ENCODE measurements at regions of chr4 and their contacts with region 1.

Region 1: GRCh38 chr4:151753041-151753440 is 7.8 kb downstream of the GATB start:
- DNase-seq: no peak
- ATAC-seq: no peak
- H3K4me3 ChIP-seq: no peak overlapping the region
- H3K27ac ChIP-seq: no peak overlapping the region
- H3K4me1 ChIP-seq: no peaks in the 10 kb centered on the region
- H3K27me3 ChIP-seq: no peaks in the 10 kb centered on the region

Region 2: GRCh38 chr4:151099229-151099975 is 653.6 kb before region 1 on chr4 and contains the start of gene RPS3A:
- intact Hi-C with region 1: loop called in 1 of 2 experiments (anchors 10 kb)
- DNase-seq: peak; percentile 97 to 98
- ATAC-seq: peak; percentile 99
- H3K4me3 ChIP-seq: peak within 1 kb of the TSS; percentile 66 to 86
- H3K27ac ChIP-seq: peak within 1 kb of the TSS; percentile 28 to 52
- H3K4me1 ChIP-seq: no peaks in the 10 kb centered on the region
- H3K27me3 ChIP-seq: no peaks in the 10 kb centered on the region
- total RNA-seq, gene RPS3A: 1,314 to 1,517 TPM

Region 3: GRCh38 chr4:151614561-151614960 is 138.5 kb before region 1 on chr4:
- intact Hi-C with region 1: no loop called
- DNase-seq: no peak
- ATAC-seq: no peak
- H3K4me3 ChIP-seq: no peak overlapping the region
- H3K27ac ChIP-seq: no peak overlapping the region
- H3K4me1 ChIP-seq: no peaks in the 10 kb centered on the region
- H3K27me3 ChIP-seq: no peaks in the 10 kb centered on the region

Region 4: DNA sequence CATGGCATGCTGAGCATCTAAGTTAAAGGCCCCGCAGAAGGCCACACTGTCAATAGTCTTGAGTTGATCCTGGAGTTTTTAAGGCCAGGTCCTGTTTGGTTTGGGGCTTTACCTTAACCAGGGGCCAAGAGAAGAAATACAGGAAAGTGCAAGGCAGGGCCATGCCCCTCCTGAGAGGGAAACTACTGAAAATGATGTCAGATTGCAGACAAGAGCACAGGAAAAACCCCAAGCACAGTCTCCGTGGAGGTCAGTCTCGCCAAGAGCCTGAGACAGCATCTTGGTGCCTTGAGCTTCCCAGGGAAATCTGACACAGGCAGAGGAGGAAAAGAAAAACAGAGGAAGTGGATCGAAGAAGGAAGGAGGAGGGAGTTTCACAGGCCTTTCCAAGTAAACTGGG is 40.0 kb after region 1 on chr4:
- intact Hi-C with region 1: no loop called
- DNase-seq: no peak
- ATAC-seq: no peak
- H3K4me3 ChIP-seq: no peak overlapping the region
- H3K27ac ChIP-seq: no peak overlapping the region
- H3K4me1 ChIP-seq: peaks cover 0 to 1% of the 10 kb centered on the region in 2 donors
- H3K27me3 ChIP-seq: no peaks in the 10 kb centered on the region

Region 5: DNA sequence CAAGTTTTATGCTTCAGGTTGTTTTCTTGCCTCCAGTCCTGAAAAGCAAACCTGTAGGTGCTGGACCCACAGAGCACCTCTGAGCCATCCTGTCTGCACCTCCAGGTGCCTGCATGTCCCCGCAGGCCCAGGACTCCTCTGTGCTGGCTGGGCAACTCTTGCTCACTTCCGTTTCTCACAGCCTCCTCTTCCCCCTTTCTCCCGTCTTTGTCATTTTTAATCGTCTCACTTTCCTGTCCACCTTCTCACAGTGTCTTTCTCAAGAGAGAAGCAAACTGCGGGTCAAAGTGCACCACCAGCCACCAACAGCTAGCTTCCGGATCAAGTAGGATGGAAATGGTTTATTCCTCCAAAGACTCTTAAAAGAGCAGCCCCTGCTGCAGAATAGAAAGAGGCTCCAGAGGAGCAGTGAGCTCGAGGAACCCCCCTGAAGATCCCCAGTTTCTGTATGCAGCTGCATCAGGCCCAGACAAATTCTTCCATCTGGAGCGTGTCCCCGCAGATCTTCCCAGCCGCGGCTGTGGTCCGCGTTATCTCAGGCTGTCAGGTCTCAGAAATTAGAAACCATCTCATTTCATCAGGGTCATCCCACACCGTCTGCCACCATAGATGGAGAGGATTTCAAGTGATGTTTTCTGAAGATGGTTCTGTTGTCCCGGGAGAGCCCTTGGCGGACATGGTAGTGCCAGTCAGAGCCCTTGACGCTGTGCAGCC is 1270.8 kb after region 1 on chr4:
- intact Hi-C with region 1: no loop called
- DNase-seq: no peak
- ATAC-seq: no peak
- H3K4me3 ChIP-seq: no peak overlapping the region
- H3K27ac ChIP-seq: no peak overlapping the region
- H3K4me1 ChIP-seq: no peaks in the 10 kb centered on the region
- H3K27me3 ChIP-seq: no peaks in the 10 kb centered on the region